ENCODE measurements at regions of chr1 and their contacts with region 1.

Region 1: DNA sequence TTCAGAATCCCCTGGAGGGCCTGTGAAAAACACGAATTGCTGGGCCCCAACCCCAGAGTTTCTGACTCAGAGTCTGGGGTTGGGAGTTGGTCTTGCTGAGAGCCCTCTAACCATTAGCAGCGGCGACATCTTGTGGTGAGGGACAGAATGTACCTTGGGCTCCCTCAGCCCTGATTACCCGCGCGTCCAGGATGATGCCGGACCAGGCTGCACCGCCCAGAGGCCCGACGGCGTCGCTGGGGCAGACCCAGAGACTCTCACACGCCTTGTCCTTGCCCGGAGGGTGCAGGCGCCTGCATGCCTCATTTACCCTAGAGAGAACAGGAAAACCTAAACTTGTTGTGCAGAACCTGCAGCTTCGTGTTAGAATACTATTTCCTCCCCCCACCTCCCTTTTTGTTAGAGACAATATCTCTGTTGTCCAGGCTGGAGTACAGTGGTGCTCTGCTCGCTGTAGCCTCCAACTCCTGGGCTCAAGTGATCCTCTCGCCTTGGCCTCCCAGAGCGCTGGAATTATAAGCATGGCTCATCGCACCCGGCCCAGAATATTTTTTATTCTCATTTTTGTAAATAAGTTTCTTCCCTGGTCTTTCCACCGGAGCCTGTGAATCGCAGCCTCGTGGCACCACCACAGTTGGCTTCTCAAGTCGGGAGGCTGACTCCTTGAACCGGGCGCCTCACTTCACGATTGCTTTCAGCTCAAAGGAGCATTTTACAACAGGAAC is 22.2 kb upstream of the RD3 start:
- DNase-seq: peak; percentile 88
- ATAC-seq: peak; percentile 77
- H3K4me3 Mint-ChIP-seq: no peak overlapping the region
- H3K27ac Mint-ChIP-seq: no peak overlapping the region
- H3K4me1 Mint-ChIP-seq: peaks cover 33% of the 10 kb centered on the region
- H3K27me3 Mint-ChIP-seq: peaks cover 5% of the 10 kb centered on the region

Region 2: DNA sequence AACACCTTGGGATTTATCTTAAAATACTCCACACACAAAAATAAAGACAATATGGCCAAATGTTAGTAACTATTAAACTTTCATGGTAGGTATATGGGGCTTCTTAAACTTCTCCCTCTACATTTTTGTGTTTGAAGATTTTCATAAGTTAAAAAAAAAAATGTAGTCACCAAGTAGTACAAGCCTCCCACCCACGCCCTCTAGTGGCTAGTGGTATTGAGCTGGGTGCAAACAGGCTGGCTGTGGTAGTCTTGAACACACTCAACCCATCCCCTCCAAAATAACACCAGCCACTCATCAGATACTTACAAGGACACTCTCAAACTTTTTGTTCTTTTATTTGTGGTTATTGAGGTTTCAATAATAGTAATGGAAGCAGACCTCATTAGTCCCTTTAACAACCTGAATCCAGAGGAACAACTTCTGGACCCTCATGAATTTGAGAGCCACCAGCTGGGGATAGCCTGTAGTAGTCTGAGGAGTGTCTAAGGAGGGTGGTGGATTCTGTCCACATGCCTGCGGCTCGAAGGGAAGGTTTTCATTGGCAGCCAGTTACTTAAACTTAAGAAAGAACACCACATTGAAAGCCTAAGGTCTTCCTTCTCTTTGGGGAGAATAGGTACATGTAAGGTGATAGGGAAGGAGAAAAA is 37.9 kb before region 1 on chr1:
- CTCF ChIA-PET with region 1: interaction called, 28 read pairs
- DNase-seq: peak; percentile 89
- ATAC-seq: peak; percentile 91
- H3K4me3 Mint-ChIP-seq: no peak overlapping the region
- H3K27ac Mint-ChIP-seq: no peak overlapping the region
- H3K4me1 Mint-ChIP-seq: peaks cover 2% of the 10 kb centered on the region
- H3K27me3 Mint-ChIP-seq: peaks cover 32% of the 10 kb centered on the region

Region 3: DNA sequence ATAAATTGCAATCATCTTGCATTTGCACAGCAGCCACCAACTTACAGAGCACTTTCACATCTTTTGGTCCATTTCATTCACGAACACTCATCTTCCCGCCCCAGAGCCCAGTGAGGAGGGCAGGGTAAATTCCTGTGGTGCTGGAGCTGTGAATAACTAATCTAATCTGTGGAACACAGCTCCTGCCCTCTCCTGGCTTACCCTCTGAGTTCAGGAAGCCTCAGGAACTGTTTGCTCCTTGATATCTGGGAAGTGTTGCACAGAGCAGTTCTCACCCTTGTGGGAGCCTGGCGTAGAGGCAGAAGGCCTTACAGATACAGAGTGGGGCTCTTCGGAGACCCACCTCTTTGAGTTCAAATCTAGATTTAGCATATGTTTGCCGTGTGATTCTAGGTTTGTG is 10.7 kb before region 1 on chr1:
- CTCF ChIA-PET with region 1: interaction called, 17 read pairs
- DNase-seq: no peak
- ATAC-seq: no peak
- H3K4me3 Mint-ChIP-seq: no peak overlapping the region
- H3K27ac Mint-ChIP-seq: no peak overlapping the region
- H3K4me1 Mint-ChIP-seq: no peaks in the 10 kb centered on the region
- H3K27me3 Mint-ChIP-seq: peaks cover 15% of the 10 kb centered on the region

Region 4: GRCh38 chr1:211524521-211524920 is 10.3 kb after region 1 on chr1:
- CTCF ChIA-PET with region 1: interaction called, 12 read pairs
- DNase-seq: no peak
- ATAC-seq: no peak
- H3K4me3 Mint-ChIP-seq: no peak overlapping the region
- H3K27ac Mint-ChIP-seq: no peak overlapping the region
- H3K4me1 Mint-ChIP-seq: peaks cover 2% of the 10 kb centered on the region
- H3K27me3 Mint-ChIP-seq: peaks cover 3% of the 10 kb centered on the region

Region 5: DNA sequence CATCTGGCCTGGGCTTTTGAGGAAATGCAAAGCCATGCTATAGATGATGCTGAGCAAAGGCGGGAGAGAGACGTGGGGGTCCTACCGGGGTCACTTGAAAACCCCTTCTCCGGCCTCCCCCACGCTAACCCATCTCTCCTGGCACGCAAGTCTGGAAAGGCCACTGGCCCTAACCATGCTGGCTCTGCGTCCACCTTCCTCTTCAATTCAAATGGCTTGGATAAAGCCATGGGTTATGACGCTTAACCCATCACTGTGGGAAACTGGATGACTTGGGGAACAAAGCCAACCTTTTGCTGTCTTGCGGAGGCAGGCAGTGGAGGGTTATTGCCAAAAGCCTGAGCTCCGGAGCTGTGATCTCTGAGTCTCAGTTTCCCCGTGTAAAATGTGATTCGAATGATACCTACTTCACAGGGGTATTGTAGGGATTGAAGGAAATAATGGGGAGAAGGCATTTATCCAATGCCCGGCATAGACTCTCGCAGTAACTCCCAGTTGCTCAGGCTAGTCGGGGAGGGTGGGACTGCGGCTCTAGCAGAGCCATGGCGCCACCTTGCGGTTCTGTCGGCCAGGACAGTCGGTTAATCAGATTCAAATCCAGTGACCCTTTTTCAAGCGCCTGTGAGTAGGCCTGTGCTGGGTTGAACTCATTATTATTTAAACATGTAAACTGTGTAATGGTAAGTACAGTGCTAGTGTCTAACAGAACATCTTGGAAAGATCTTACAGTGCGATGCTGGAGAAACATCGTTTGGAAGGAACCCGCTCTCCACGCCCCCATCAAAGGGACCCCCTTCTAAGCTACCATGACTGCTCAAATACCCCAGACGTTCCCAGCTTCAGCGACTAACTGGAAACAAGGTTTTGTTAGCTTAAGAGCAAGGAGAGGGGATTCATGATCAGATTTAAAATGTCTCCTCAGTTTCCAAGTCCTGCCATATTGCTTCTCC is 140.9 kb after region 1 on chr1:
- CTCF ChIA-PET with region 1: interaction called, 63 read pairs
- DNase-seq: peak; percentile 88
- ATAC-seq: peak; percentile 94
- H3K4me3 Mint-ChIP-seq: no peak overlapping the region
- H3K27ac Mint-ChIP-seq: no peak overlapping the region
- H3K4me1 Mint-ChIP-seq: peaks cover 3% of the 10 kb centered on the region
- H3K27me3 Mint-ChIP-seq: no peaks in the 10 kb centered on the region

Region 6: GRCh38 chr1:211684791-211685190 is 170.6 kb after region 1 on chr1:
- CTCF ChIA-PET with region 1: no interaction called
- DNase-seq: no peak
- ATAC-seq: no peak
- H3K4me3 Mint-ChIP-seq: no peak overlapping the region
- H3K27ac Mint-ChIP-seq: no peak overlapping the region
- H3K4me1 Mint-ChIP-seq: peaks cover 23% of the 10 kb centered on the region
- H3K27me3 Mint-ChIP-seq: no peaks in the 10 kb centered on the region

Measured in activated CD8-positive, alpha-beta memory T cell treated with anti-CD3 and anti-CD28 coated beads, Interleukin-2, amount 10 ng/mL, durations not matched to agents 7 days and 5 days (primary cell).